ENCODE measurements at regions of chr4 and their contacts with region 1.

Region 1: GRCh38 chr4:81844717-81845116 is 373.0 kb upstream of the RASGEF1B start:
- DNase-seq: peak in 2 of 3 donors; percentile 40 to 92
- ATAC-seq: peak; percentile 98
- H3K4me3 ChIP-seq: no peak overlapping the region
- H3K4me1 ChIP-seq: no peaks in the 10 kb centered on the region
- CTCF ChIP-seq: peak; percentile 63

Region 2: GRCh38 chr4:81466841-81467671 is 377.7 kb before region 1 on chr4:
- intact Hi-C with region 1: loop called (anchors 1 to 5 kb)
- DNase-seq: peak in 1 of 3 donors; percentile 98
- ATAC-seq: no peak
- H3K4me3 ChIP-seq: no peak overlapping the region
- H3K4me1 ChIP-seq: peaks cover 34% of the 10 kb centered on the region
- CTCF ChIP-seq: peak; percentile 77

Region 3: GRCh38 chr4:82217986-82218715 is 373.4 kb after region 1 on chr4:
- intact Hi-C with region 1: no loop called
- DNase-seq: no peak
- ATAC-seq: no peak
- H3K4me3 ChIP-seq: no peak overlapping the region
- H3K4me1 ChIP-seq: no peaks in the 10 kb centered on the region
- CTCF ChIP-seq: no peak